B cell (primary cell): ENCODE measurements at regions of chr6 and their contacts with region 1.

Region 1: GRCh38 chr6:135909737-135910387 is 58.4 kb downstream of the PDE7B start:
- DNase-seq: peak; percentile 80
- ATAC-seq: peak; percentile 85
- H3K4me3 ChIP-seq: no peak overlapping the region
- H3K4me3 Mint-ChIP-seq: peak overlapping the region; percentile 21
- H3K27ac ChIP-seq: no peak overlapping the region
- H3K27ac Mint-ChIP-seq: peak overlapping the region; percentile 53
- H3K4me1 ChIP-seq: peaks cover 0 to 3% of the 10 kb centered on the region in 2 donors
- H3K4me1 Mint-ChIP-seq: peaks cover 2% of the 10 kb centered on the region
- H3K27me3 ChIP-seq: no peaks in the 10 kb centered on the region
- H3K27me3 Mint-ChIP-seq: no peaks in the 10 kb centered on the region
- CTCF ChIP-seq: peak; percentile 85

Region 2: GRCh38 chr6:135506270-135506997 is 403.4 kb before region 1 on chr6:
- CTCF ChIA-PET with region 1: interaction called, 3 read pairs
- POLR2A ChIA-PET with region 1: no interaction called
- intact Hi-C with region 1: loop called (anchors 1 kb)
- DNase-seq: peak; percentile 58
- ATAC-seq: peak; percentile 67
- H3K4me3 ChIP-seq: no peak overlapping the region
- H3K4me3 Mint-ChIP-seq: no peak overlapping the region
- H3K27ac ChIP-seq: no peak overlapping the region
- H3K27ac Mint-ChIP-seq: no peak overlapping the region
- H3K4me1 ChIP-seq: no peaks in the 10 kb centered on the region
- H3K4me1 Mint-ChIP-seq: peaks cover 2% of the 10 kb centered on the region
- H3K27me3 ChIP-seq: no peaks in the 10 kb centered on the region
- H3K27me3 Mint-ChIP-seq: no peaks in the 10 kb centered on the region
- CTCF ChIP-seq: peak; percentile 81

Region 3: GRCh38 chr6:135675862-135676261 is 234.0 kb before region 1 on chr6:
- CTCF ChIA-PET with region 1: interaction called, 173 read pairs
- POLR2A ChIA-PET with region 1: no interaction called
- intact Hi-C with region 1: loop called (anchors 1 kb)
- DNase-seq: peak; percentile 78
- ATAC-seq: peak; percentile 64
- H3K4me3 ChIP-seq: no peak overlapping the region
- H3K4me3 Mint-ChIP-seq: no peak overlapping the region
- H3K27ac ChIP-seq: no peak overlapping the region
- H3K27ac Mint-ChIP-seq: no peak overlapping the region
- H3K4me1 ChIP-seq: no peaks in the 10 kb centered on the region
- H3K4me1 Mint-ChIP-seq: no peaks in the 10 kb centered on the region
- H3K27me3 ChIP-seq: no peaks in the 10 kb centered on the region
- H3K27me3 Mint-ChIP-seq: no peaks in the 10 kb centered on the region
- CTCF ChIP-seq: peak; percentile 87

Region 4: DNA sequence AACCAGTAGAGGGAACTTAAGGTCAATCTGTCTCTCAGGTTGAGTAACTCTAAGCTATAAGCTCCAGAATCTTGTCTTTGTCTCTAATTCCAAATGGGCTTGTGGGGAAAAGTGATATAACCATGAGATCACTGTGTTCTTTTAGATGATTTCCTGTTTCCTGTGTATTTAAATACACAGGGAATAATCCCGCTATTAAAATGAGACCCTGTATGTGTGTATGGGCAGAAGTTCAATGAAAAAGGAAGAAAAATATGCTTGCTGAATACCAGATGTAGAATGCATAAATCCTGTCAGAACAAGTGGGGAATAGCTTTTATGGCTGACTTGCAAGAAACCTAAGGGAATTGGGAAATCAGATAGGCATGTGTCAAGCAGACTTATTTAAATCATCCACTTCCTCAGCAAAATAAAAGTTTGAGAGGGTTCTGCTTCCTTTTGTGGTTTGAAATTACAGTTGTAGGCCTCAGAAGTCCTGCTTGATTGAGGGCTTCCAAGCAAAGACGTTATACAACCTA is 223.0 kb before region 1 on chr6:
- CTCF ChIA-PET with region 1: interaction called, 10 read pairs
- POLR2A ChIA-PET with region 1: no interaction called
- intact Hi-C with region 1: no loop called
- DNase-seq: no peak
- ATAC-seq: no peak
- H3K4me3 ChIP-seq: no peak overlapping the region
- H3K4me3 Mint-ChIP-seq: no peak overlapping the region
- H3K27ac ChIP-seq: no peak overlapping the region
- H3K27ac Mint-ChIP-seq: no peak overlapping the region
- H3K4me1 ChIP-seq: peaks cover 2 to 11% of the 10 kb centered on the region in 2 donors
- H3K4me1 Mint-ChIP-seq: peaks cover 15% of the 10 kb centered on the region
- H3K27me3 ChIP-seq: no peaks in the 10 kb centered on the region
- H3K27me3 Mint-ChIP-seq: peaks cover 8% of the 10 kb centered on the region
- CTCF ChIP-seq: no peak

Region 5: GRCh38 chr6:135759831-135760230 is 150.0 kb before region 1 on chr6:
- CTCF ChIA-PET with region 1: interaction called, 18 read pairs
- POLR2A ChIA-PET with region 1: no interaction called
- intact Hi-C with region 1: no loop called
- DNase-seq: no peak
- ATAC-seq: no peak
- H3K4me3 ChIP-seq: no peak overlapping the region
- H3K4me3 Mint-ChIP-seq: no peak overlapping the region
- H3K27ac ChIP-seq: no peak overlapping the region
- H3K27ac Mint-ChIP-seq: no peak overlapping the region
- H3K4me1 ChIP-seq: no peaks in the 10 kb centered on the region
- H3K4me1 Mint-ChIP-seq: no peaks in the 10 kb centered on the region
- H3K27me3 ChIP-seq: no peaks in the 10 kb centered on the region
- H3K27me3 Mint-ChIP-seq: no peaks in the 10 kb centered on the region
- CTCF ChIP-seq: no peak

Region 6: DNA sequence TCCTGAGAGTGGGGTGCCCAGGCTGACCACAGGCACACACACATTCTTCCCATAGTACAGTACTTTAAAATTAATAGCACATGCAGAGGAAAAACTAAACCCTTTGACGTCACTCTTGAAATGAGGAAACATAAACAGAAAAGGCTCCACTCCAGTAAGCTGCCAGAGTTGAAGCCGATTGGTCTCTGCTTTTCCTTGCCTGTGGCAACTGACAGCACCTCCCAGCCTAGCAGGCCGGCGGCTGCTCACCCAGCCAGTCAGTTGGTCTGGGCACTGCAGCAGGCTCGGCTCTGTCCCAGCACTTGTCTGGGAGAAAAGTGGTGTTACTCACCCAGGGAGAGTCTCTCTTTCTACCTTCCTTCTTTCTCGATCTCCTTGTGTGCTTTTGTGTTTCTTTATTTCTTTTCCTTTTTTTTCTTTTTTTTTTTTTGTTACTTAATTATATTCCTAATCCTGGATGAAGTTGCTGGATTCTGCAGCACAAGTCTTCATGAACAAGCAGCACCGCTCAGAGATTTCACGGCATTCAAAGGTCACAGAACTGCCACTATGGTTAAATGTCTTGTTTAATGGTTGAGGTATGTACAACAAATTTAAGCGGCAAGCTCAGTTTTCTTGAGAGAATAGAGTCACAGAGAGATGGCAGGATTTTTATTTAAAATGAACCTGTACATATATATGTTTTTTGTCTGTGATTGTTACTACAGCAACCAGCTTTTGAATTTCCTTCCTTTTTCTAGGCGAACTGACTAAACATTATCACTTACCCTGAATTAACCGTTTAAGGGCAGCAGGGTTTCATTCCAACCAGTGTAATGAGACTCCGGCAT is 58.2 kb before region 1 on chr6 and contains the start of gene PDE7B:
- CTCF ChIA-PET with region 1: interaction called, 18 read pairs
- POLR2A ChIA-PET with region 1: no interaction called
- intact Hi-C with region 1: loop called (anchors 10 kb)
- DNase-seq: peak; percentile 86
- ATAC-seq: peak; percentile 99
- H3K4me3 ChIP-seq: peak within 1 kb of the TSS; percentile 40 to 82 (median 67)
- H3K4me3 Mint-ChIP-seq: peak within 1 kb of the TSS; percentile 87
- H3K27ac ChIP-seq: peak within 1 kb of the TSS; percentile 64 to 85
- H3K27ac Mint-ChIP-seq: peak within 1 kb of the TSS; percentile 79
- H3K4me1 ChIP-seq: peaks cover 17 to 40% of the 10 kb centered on the region in 2 donors
- H3K4me1 Mint-ChIP-seq: peaks cover 48% of the 10 kb centered on the region
- H3K27me3 ChIP-seq: no peaks in the 10 kb centered on the region
- H3K27me3 Mint-ChIP-seq: no peaks in the 10 kb centered on the region
- CTCF ChIP-seq: no peak
- total RNA-seq, gene PDE7B: 7.5 and 9.2 TPM in 2 replicates

Region 7: GRCh38 chr6:136226027-136226673 is 316.3 kb after region 1 on chr6:
- CTCF ChIA-PET with region 1: interaction called, 43 read pairs
- POLR2A ChIA-PET with region 1: no interaction called
- intact Hi-C with region 1: loop called (anchors 1 kb)
- DNase-seq: peak; percentile 79
- ATAC-seq: peak; percentile 97
- H3K4me3 ChIP-seq: peak overlapping the region in 3 of 5 experiments; percentile 25 to 49 (median 38)
- H3K4me3 Mint-ChIP-seq: peak overlapping the region; percentile 51
- H3K27ac ChIP-seq: no peak overlapping the region
- H3K27ac Mint-ChIP-seq: no peak overlapping the region
- H3K4me1 ChIP-seq: peaks cover 10 to 14% of the 10 kb centered on the region in 2 donors
- H3K4me1 Mint-ChIP-seq: peaks cover 12% of the 10 kb centered on the region
- H3K27me3 ChIP-seq: no peaks in the 10 kb centered on the region
- H3K27me3 Mint-ChIP-seq: peaks cover 3% of the 10 kb centered on the region
- CTCF ChIP-seq: peak; percentile 100